Endothelial cell of umbilical vein (primary cell): ENCODE measurements at regions of chr1 and their contacts with region 1.

Region 1: GRCh38 chr1:67053785-67054772 is at the start of gene SLC35D1:
- DNase-seq: peak; percentile 80
- H3K4me3 ChIP-seq: peak within 1 kb of the TSS; percentile 72 to 83 (median 81)
- H3K27ac ChIP-seq: peak within 1 kb of the TSS; percentile 74
- H3K4me1 ChIP-seq: peaks cover 13% of the 10 kb centered on the region
- H3K27me3 ChIP-seq: no peaks in the 10 kb centered on the region
- CTCF ChIP-seq: no peak
- POLR2A ChIP-seq: peak; percentile 81
- total RNA-seq, gene SLC35D1: 6.1 and 6.6 TPM in 2 replicates

Region 2: GRCh38 chr1:66764994-66765578 is 289.0 kb before region 1 on chr1:
- CTCF ChIA-PET with region 1: no interaction called
- POLR2A ChIA-PET with region 1: no interaction called
- dilution Hi-C with region 1: no loop called
- intact Hi-C with region 1: loop called (anchors 1 kb)
- DNase-seq: peak; percentile 79
- H3K4me3 ChIP-seq: no peak overlapping the region
- H3K27ac ChIP-seq: no peak overlapping the region
- H3K4me1 ChIP-seq: no peaks in the 10 kb centered on the region
- H3K27me3 ChIP-seq: no peaks in the 10 kb centered on the region
- CTCF ChIP-seq: peak; percentile 48 to 54
- POLR2A ChIP-seq: no peak

Region 3: DNA sequence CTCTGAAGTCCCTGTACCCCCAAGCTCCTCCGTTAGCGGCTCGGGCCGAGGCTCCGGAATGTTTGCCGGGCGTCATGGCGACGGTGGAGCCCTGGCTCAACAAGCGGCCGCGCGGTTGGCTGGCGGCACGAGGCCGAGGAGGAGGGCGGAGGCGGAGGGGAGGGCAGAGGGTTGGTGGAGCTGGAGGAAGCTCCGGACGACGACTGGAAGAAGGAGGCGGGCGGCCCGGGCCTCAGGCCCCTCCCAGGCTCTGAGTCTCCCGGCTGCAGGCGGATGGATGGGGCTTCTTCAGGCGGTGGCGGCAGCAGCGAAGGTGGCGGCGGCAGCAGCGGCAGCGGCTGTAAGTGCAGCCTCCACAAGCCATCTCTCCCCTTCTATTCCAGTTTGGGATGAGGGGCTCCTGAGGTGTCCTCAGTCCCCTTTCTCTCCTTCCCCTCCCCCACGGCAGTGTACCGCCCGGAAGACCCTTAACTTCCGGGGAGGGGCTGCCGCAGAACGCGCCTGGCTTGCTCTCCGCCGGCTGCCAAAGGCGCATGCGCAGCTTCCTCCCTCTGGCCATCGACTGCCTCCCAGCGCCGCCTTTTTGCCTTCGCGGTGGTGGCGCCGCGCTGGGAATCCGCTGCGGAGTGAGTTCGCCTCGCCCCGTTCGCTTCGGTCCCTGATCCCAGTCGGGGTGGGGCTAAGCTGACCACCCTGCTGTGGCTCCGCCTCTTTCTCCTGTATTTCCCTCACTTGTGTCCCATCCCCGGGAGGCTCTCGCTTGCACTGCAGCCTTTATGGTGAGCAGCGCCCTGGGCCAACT is 129.1 kb before region 1 on chr1 and contains the starts of genes DNAI4 and MIER1:
- CTCF ChIA-PET with region 1: interaction called, 5 read pairs
- POLR2A ChIA-PET with region 1: no interaction called
- dilution Hi-C with region 1: no loop called
- intact Hi-C with region 1: loop called (anchors 1 kb)
- DNase-seq: peak; percentile 99
- H3K4me3 ChIP-seq: peak within 1 kb of the TSS; percentile 70 to 90 (median 82)
- H3K27ac ChIP-seq: peak within 1 kb of the TSS; percentile 95
- H3K4me1 ChIP-seq: peaks cover 30% of the 10 kb centered on the region
- H3K27me3 ChIP-seq: no peaks in the 10 kb centered on the region
- CTCF ChIP-seq: peak in 1 of 2 donors; percentile 15
- POLR2A ChIP-seq: peak; percentile 95
- total RNA-seq, gene DNAI4: 3.3 and 4.8 TPM in 2 replicates
- total RNA-seq, gene MIER1: 36.8 and 38.5 TPM in 2 replicates

Region 4: DNA sequence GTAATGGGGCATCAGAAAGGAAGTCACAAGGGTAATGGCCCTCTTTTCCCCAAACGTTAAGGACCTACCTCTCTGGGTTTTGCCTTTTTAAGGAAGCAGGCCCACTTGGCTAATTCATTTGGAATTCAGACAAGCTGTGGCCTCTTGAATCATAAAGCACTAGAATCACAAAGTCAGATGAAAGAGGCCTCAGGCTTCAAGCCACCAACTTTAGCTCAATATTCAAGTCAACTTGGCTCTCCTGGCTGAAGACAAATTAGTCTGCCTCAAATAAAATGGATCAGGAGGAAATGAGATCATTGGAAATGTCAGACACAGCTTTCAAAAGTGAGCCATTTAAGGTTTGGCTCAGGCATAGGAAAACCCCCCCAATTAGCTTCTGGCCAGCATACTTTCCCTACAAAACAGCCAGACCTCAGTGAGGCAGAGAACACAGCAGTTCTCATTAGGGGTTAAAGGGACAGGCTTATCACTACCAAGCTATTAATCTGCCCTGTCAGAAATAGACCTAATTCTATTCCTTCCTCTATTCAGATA is 34.4 kb before region 1 on chr1:
- CTCF ChIA-PET with region 1: interaction called, 10 read pairs
- POLR2A ChIA-PET with region 1: interaction called, 5 read pairs
- dilution Hi-C with region 1: no loop called
- intact Hi-C with region 1: no loop called
- DNase-seq: peak; percentile 87
- H3K4me3 ChIP-seq: no peak overlapping the region
- H3K27ac ChIP-seq: peak overlapping the region; percentile 59
- H3K4me1 ChIP-seq: peaks cover 18% of the 10 kb centered on the region
- H3K27me3 ChIP-seq: no peaks in the 10 kb centered on the region
- CTCF ChIP-seq: no peak
- POLR2A ChIP-seq: no peak

Region 5: DNA sequence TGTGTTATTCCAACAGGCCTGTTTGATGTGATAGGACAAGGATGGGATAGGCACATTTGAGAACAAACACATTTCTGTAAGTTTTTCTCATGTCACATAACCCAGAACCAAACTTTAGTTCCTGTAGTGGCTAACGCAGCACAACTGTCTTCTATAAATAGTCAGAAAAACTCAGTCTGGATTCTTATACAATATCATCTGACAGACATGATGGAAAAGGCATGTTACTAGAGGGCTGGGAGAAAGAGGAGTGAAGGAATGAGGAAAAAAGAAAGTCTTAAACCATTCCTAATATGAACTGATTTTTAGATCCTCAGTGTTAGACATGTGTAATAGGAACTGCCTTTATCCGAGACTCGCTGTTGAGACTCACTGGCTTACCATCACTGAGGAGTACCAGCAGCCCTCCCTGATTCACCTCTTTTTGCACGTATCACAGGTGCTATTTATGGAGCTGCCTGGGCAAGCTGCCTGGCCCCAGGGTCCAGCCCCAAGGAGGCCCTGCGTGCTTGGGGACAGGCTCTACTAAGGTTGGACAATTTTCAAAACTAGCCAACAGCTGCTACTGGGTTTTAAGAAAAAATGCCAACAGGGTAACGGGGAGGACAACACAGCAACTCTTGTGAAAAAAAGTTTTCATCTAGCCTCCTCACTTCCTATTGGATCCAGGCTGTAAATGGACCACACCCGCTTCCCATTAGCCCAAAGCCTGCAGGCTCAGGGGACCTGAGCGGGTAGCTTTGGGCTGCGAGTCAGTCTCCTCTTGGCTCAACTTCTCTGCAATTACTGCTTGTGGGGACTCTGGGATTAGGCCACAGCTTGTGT is 406.8 kb after region 1 on chr1:
- CTCF ChIA-PET with region 1: no interaction called
- POLR2A ChIA-PET with region 1: no interaction called
- dilution Hi-C with region 1: no loop called
- intact Hi-C with region 1: loop called (anchors 10 kb)
- DNase-seq: no peak
- H3K4me3 ChIP-seq: no peak overlapping the region
- H3K27ac ChIP-seq: no peak overlapping the region
- H3K4me1 ChIP-seq: peaks cover 12% of the 10 kb centered on the region
- H3K27me3 ChIP-seq: no peaks in the 10 kb centered on the region
- CTCF ChIP-seq: no peak
- POLR2A ChIP-seq: no peak